Activated B cell treated with CpG ODN at 0.5 μM for 24 hours (primary cell): ENCODE measurements at regions of chr18 and their contacts with region 1.

Region 1: GRCh38 chr18:5890331-5891183 is 4.8 kb downstream of the TMEM200C start:
- DNase-seq: peak; percentile 24
- ATAC-seq: peak; percentile 75
- H3K4me3 Mint-ChIP-seq: no peak overlapping the region
- H3K27ac Mint-ChIP-seq: no peak overlapping the region
- H3K4me1 Mint-ChIP-seq: peaks cover 14% of the 10 kb centered on the region
- H3K27me3 Mint-ChIP-seq: peaks cover 44% of the 10 kb centered on the region
- CTCF ChIP-seq: no peak

Region 2: DNA sequence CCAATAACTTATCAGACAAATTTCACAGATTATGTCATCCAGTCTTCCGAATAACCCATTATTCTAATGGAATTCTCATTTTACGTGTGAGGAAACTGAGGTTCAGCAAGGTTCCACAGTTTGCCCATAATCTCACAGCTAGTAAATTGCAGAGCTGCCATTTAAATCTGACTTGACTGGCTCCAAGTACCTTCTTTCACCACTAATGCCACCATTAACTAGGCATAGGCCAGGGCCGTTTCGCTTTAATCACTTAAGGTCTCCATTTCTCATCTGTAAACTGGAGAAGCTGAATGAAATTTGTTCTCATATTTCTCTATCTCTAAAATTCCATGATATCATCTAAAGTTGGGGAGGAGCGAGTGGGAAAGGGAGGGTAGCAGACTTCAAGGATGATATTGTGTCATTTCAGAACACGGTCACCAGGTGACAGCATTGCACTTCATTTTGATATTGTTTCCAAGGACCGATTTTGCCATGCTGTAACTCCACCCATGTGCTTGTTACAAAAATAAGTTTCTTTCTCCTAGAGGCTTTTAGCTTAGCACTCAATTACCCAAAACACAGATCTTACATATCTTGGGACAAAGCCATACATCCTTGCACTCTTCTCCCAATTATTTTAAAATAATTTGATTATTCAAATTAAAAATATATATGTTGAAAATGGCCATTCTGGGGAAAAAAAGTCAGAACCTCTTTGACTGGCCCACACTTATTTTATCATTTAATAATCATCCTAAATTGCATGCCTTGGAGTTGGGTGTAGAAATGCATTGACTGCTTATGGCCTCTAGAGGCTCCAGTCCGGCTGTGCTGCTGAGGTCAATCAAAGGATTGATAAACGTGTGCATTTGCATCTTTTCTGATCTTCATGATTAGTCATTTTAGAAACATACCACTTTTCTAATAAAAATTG is 817.3 kb before region 1 on chr18:
- CTCF ChIA-PET with region 1: no interaction called
- POLR2A ChIA-PET with region 1: no interaction called
- intact Hi-C with region 1: loop called (anchors 1 kb)
- DNase-seq: no peak
- ATAC-seq: no peak
- H3K4me3 Mint-ChIP-seq: no peak overlapping the region
- H3K27ac Mint-ChIP-seq: no peak overlapping the region
- H3K4me1 Mint-ChIP-seq: no peaks in the 10 kb centered on the region
- H3K27me3 Mint-ChIP-seq: peaks cover 2% of the 10 kb centered on the region
- CTCF ChIP-seq: no peak

Region 3: DNA sequence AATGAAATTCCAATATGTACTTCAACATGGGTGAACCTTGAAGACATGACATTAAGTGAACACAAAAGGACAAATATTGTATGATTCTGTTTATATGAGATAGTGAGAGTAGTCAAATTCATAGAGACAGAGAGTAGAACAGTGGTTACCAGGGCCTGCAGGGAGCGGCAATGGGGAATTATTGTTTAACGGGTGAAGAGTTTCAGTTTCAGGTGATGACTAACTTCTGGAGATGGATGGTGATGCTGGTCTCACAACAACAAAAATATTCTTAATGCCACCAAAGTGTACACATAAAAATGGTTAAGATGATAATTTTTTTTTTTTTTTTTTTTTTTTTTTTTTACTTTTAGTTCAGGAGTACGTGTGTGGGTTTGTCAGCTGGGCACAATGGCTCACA is 114.1 kb after region 1 on chr18:
- CTCF ChIA-PET with region 1: no interaction called
- POLR2A ChIA-PET with region 1: no interaction called
- intact Hi-C with region 1: loop called (anchors 10 kb)
- DNase-seq: no peak
- ATAC-seq: peak; percentile 79
- H3K4me3 Mint-ChIP-seq: no peak overlapping the region
- H3K27ac Mint-ChIP-seq: no peak overlapping the region
- H3K4me1 Mint-ChIP-seq: peaks cover 7% of the 10 kb centered on the region
- H3K27me3 Mint-ChIP-seq: no peaks in the 10 kb centered on the region
- CTCF ChIP-seq: no peak

Region 4: GRCh38 chr18:6044773-6045172 is 154.2 kb after region 1 on chr18:
- CTCF ChIA-PET with region 1: no interaction called
- POLR2A ChIA-PET with region 1: no interaction called
- intact Hi-C with region 1: no loop called
- DNase-seq: no peak
- ATAC-seq: no peak
- H3K4me3 Mint-ChIP-seq: no peak overlapping the region
- H3K27ac Mint-ChIP-seq: no peak overlapping the region
- H3K4me1 Mint-ChIP-seq: no peaks in the 10 kb centered on the region
- H3K27me3 Mint-ChIP-seq: no peaks in the 10 kb centered on the region
- CTCF ChIP-seq: no peak

Region 5: GRCh38 chr18:7403950-7404349 is 1513.4 kb after region 1 on chr18:
- CTCF ChIA-PET with region 1: no interaction called
- POLR2A ChIA-PET with region 1: no interaction called
- intact Hi-C with region 1: no loop called
- DNase-seq: no peak
- ATAC-seq: no peak
- H3K4me3 Mint-ChIP-seq: no peak overlapping the region
- H3K27ac Mint-ChIP-seq: no peak overlapping the region
- H3K4me1 Mint-ChIP-seq: no peaks in the 10 kb centered on the region
- H3K27me3 Mint-ChIP-seq: no peaks in the 10 kb centered on the region
- CTCF ChIP-seq: no peak